ENCODE measurements at regions of chr9 and their contacts with region 1.

Region 1: DNA sequence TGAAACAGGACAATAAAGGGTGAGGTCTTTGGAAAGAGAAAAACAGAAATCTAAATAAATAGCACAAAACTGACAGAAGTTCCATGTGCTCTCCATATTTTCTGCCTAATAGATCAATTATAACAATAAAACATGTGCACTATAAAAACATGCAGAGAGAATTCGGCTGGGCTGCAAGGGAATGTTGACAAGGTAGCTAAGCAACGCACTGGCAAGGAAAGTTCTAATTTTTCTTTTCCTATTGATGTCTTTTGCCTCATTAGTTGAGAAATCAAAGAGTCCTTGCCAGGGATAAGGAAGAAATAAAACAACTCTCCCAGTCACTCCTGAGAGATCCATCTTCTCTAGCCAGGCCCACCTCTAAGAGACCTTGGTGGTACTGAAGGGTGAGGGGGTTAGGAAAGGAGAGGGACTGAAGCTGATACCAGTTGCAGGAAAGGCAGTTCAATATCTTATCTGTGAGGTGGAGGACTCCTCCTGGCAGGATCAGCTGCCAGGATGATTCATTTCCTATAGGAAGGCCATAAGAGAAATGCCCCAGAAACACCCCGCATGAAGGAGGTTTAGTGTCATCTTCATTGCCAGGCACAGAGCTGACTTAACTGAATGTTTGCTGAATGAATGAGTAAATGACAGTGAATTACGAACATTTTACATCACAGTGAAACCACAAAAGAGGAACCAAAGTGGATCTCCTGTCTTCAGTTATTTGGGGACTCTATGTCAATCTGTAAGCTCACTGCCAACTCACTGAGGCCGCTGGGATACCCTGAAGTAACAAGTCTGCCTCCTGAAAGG is 63.7 kb upstream of the IFNK start:
- DNase-seq: peak; percentile 37
- ATAC-seq: peak; percentile 96
- H3K4me3 ChIP-seq: no peak overlapping the region
- H3K27ac ChIP-seq: no peak overlapping the region
- H3K4me1 ChIP-seq: peaks cover 12% of the 10 kb centered on the region; the same call in 1 of the 2 replicates
- H3K27me3 ChIP-seq: no peaks in the 10 kb centered on the region
- CTCF ChIP-seq: no peak
- EP300 ChIP-seq: no peak
- POLR2A ChIP-seq: no peak
- RAD21 ChIP-seq: no peak

Region 2: DNA sequence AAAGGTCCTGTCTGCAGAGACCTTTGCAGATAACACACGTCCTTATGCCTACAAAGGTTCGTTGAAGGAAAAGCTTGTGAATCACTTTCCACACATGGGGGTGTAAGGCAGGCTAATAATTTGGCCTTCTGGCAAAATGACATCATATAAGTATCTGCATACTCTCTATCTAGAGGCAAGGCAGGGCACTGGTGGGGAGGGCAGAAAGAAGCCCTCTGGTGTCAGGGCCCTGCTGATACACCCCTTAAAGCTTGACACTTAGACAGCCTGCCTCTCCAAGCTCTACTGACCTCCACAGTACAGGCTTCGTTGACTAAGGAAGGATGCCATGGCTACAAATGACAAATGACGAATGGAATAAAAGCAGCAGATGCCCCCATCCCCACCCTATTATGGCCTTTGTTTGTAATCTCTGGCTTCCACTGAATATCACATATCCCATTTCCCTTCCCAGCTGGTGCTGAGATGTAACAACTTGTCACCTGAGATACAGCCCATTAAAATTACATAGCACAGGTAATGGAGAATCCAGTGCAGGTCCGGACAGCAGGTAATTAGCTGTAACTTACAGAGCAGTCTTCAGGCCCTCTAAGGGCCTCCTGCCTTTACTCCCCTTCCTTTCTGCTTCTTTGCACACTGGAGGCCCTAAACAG is 13.3 kb before region 1 on chr9:
- CTCF ChIA-PET with region 1: interaction called, 7 read pairs
- POLR2A ChIA-PET with region 1: no interaction called
- RAD21 ChIA-PET with region 1: interaction called, 4 read pairs
- SMC1A ChIA-PET with region 1: interaction called, 19 read pairs
- in situ Hi-C with region 1: no loop called
- intact Hi-C with region 1: no loop called
- DNase-seq: no peak
- ATAC-seq: peak; percentile 54; the same call in 2 of the 3 replicates
- H3K4me3 ChIP-seq: no peak overlapping the region
- H3K27ac ChIP-seq: no peak overlapping the region
- H3K4me1 ChIP-seq: peaks cover 2% of the 10 kb centered on the region; the same call in 1 of the 2 replicates
- H3K27me3 ChIP-seq: no peaks in the 10 kb centered on the region
- CTCF ChIP-seq: no peak
- EP300 ChIP-seq: no peak
- POLR2A ChIP-seq: no peak
- RAD21 ChIP-seq: no peak

Region 3: DNA sequence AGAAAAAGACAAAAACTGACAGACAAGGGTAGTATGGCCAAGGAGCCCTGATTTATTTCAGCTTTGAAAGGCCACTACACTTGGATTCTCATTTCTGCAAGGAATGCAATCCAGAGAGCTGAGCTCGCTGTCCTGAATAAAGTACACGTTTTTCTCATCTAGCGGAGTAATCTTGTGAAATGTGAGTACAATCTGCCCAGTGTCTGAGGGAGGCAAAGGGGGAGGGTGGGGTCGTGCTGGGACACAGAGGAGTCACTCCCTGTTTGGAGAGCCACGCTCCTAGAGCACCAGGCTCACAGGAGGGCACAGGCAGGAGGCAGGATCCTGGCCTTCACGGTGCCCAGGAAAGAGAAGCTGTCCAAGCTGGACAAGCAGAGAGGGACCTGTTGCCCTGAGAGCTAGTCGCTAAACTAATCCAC is 12.7 kb after region 1 on chr9:
- CTCF ChIA-PET with region 1: interaction called, 20 read pairs
- POLR2A ChIA-PET with region 1: no interaction called
- RAD21 ChIA-PET with region 1: no interaction called
- SMC1A ChIA-PET with region 1: interaction called, 9 read pairs
- in situ Hi-C with region 1: no loop called
- intact Hi-C with region 1: no loop called
- DNase-seq: no peak
- ATAC-seq: no peak
- H3K4me3 ChIP-seq: no peak overlapping the region
- H3K27ac ChIP-seq: no peak overlapping the region
- H3K4me1 ChIP-seq: no peaks in the 10 kb centered on the region
- H3K27me3 ChIP-seq: no peaks in the 10 kb centered on the region
- CTCF ChIP-seq: no peak
- EP300 ChIP-seq: no peak
- POLR2A ChIP-seq: no peak
- RAD21 ChIP-seq: no peak